WTC11 (cell line): ENCODE measurements at regions of chr5 and their contacts with region 1.

Region 1: GRCh38 chr5:149114403-149115312 is 26.6 kb upstream of the ABLIM3 start:
- DNase-seq: peak; percentile 59
- ATAC-seq: peak; percentile 99
- H3K4me3 Mint-ChIP-seq: no peak overlapping the region
- H3K27ac Mint-ChIP-seq: no peak overlapping the region
- H3K4me1 Mint-ChIP-seq: no peaks in the 10 kb centered on the region
- H3K27me3 Mint-ChIP-seq: no peaks in the 10 kb centered on the region; the same call in 1 of the 2 replicates
- CTCF ChIP-seq: peak; percentile 48

Region 2: GRCh38 chr5:148820461-148821395 is 293.9 kb before region 1 on chr5:
- CTCF ChIA-PET with region 1: interaction called, 14 read pairs
- POLR2A ChIA-PET with region 1: no interaction called
- DNase-seq: no peak
- ATAC-seq: peak; percentile 66
- H3K4me3 Mint-ChIP-seq: no peak overlapping the region
- H3K27ac Mint-ChIP-seq: no peak overlapping the region
- H3K4me1 Mint-ChIP-seq: peaks cover 29% of the 10 kb centered on the region
- H3K27me3 Mint-ChIP-seq: peaks cover 14% of the 10 kb centered on the region
- CTCF ChIP-seq: no peak

Region 3: GRCh38 chr5:148979104-148979723 is 135.4 kb before region 1 on chr5:
- CTCF ChIA-PET with region 1: interaction called, 12 read pairs
- POLR2A ChIA-PET with region 1: no interaction called
- DNase-seq: no peak
- ATAC-seq: no peak
- H3K4me3 Mint-ChIP-seq: no peak overlapping the region
- H3K27ac Mint-ChIP-seq: no peak overlapping the region
- H3K4me1 Mint-ChIP-seq: peaks cover 47% of the 10 kb centered on the region
- H3K27me3 Mint-ChIP-seq: no peaks in the 10 kb centered on the region
- CTCF ChIP-seq: no peak

Region 4: DNA sequence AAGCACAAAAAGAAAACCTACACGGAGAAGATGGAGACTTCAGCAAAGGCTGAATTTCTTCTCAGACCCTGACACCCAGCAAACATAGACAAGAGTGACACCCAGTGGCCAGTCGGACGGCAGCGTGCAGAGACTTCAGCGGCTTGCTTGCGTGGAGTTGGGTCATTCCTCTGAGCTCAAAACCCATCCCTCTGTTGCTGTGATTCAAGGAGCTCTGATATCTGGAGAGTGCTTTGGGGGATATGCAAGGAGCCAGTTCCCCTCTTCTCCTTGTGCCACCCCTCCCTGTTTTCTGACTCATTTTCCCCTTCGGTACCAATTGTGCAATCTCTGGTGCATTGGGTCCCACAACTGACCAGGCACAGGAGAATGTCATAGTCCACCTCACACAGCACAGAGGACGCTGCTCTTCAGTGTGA is 79.3 kb before region 1 on chr5:
- CTCF ChIA-PET with region 1: interaction called, 51 read pairs
- POLR2A ChIA-PET with region 1: no interaction called
- DNase-seq: peak; percentile 81
- ATAC-seq: peak; percentile 93
- H3K4me3 Mint-ChIP-seq: no peak overlapping the region
- H3K27ac Mint-ChIP-seq: no peak overlapping the region
- H3K4me1 Mint-ChIP-seq: no peaks in the 10 kb centered on the region
- H3K27me3 Mint-ChIP-seq: no peaks in the 10 kb centered on the region; the same call in 1 of the 2 replicates
- CTCF ChIP-seq: peak; percentile 64

Region 5: GRCh38 chr5:149125386-149125891 is 10.8 kb after region 1 on chr5:
- CTCF ChIA-PET with region 1: interaction called, 72 read pairs
- POLR2A ChIA-PET with region 1: no interaction called
- DNase-seq: peak; percentile 65
- ATAC-seq: peak; percentile 95
- H3K4me3 Mint-ChIP-seq: no peak overlapping the region
- H3K27ac Mint-ChIP-seq: no peak overlapping the region
- H3K4me1 Mint-ChIP-seq: peaks cover 23% of the 10 kb centered on the region
- H3K27me3 Mint-ChIP-seq: no peaks in the 10 kb centered on the region
- CTCF ChIP-seq: no peak

Region 6: DNA sequence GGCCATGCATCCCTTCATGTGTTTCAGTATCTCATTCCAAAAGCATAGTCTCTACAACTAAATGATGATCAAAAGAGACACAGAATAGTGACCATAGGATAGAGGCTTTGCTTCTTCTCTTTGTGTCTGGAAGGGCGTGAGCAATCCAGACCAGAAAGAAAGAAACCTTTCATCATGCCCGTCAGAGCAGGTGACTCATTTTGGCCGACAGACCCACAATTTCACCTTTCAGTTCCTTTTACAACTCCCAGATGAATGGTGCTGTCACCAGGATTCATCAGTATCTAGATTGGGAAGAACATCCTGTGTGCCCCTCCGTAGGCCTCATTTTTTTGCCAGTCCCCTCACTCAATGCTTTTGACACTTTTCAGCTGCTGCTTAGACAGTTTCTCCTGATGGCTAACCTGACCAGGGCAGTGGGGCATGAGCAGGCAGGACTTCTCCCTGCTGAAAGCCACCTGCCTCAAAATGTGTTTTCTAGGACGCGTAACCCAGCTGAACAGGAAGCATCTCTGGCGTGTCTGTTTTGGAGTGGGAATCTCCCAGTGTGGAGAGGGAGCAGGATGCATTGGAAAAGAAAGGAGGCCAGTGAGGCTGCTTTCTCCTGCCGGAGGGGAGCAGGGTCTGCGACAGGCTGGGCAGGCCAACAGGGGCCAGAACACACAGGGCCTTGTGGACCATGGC is 47.9 kb after region 1 on chr5:
- CTCF ChIA-PET with region 1: no interaction called
- POLR2A ChIA-PET with region 1: no interaction called
- DNase-seq: no peak
- ATAC-seq: no peak
- H3K4me3 Mint-ChIP-seq: no peak overlapping the region
- H3K27ac Mint-ChIP-seq: no peak overlapping the region
- H3K4me1 Mint-ChIP-seq: no peaks in the 10 kb centered on the region
- H3K27me3 Mint-ChIP-seq: no peaks in the 10 kb centered on the region
- CTCF ChIP-seq: no peak

Region 7: GRCh38 chr5:149268928-149269557 is 154.4 kb after region 1 on chr5:
- CTCF ChIA-PET with region 1: interaction called, 14 read pairs
- POLR2A ChIA-PET with region 1: no interaction called
- DNase-seq: no peak
- ATAC-seq: 0 out of 2 replicates have a peak, but pooled peaks have one; percentile 4
- H3K4me3 Mint-ChIP-seq: no peak overlapping the region
- H3K27ac Mint-ChIP-seq: no peak overlapping the region
- H3K4me1 Mint-ChIP-seq: peaks cover 33% of the 10 kb centered on the region
- H3K27me3 Mint-ChIP-seq: peaks cover 51% of the 10 kb centered on the region
- CTCF ChIP-seq: peak; percentile 85

Region 8: GRCh38 chr5:149333711-149334443 is 219.2 kb after region 1 on chr5:
- CTCF ChIA-PET with region 1: no interaction called
- POLR2A ChIA-PET with region 1: no interaction called
- DNase-seq: no peak
- ATAC-seq: no peak
- H3K4me3 Mint-ChIP-seq: no peak overlapping the region
- H3K27ac Mint-ChIP-seq: no peak overlapping the region
- H3K4me1 Mint-ChIP-seq: no peaks in the 10 kb centered on the region
- H3K27me3 Mint-ChIP-seq: no peaks in the 10 kb centered on the region
- CTCF ChIP-seq: no peak